Activated T-helper 1 cell treated with anti-CD3 and anti-CD28 coated beads, Interleukin-12 subunit alpha, Interleukin-12 subunit beta, Interleukin-2, Interleukin-4 antibody, amounts not matched to agents 30 ng/mL and 10 ng/mL and 1 ng/mL, durations not matched to agents 14 hours and 24 hours and 36 hours (primary cell): ENCODE measurements at regions of chr11 and their contacts with region 1.

Region 1: DNA sequence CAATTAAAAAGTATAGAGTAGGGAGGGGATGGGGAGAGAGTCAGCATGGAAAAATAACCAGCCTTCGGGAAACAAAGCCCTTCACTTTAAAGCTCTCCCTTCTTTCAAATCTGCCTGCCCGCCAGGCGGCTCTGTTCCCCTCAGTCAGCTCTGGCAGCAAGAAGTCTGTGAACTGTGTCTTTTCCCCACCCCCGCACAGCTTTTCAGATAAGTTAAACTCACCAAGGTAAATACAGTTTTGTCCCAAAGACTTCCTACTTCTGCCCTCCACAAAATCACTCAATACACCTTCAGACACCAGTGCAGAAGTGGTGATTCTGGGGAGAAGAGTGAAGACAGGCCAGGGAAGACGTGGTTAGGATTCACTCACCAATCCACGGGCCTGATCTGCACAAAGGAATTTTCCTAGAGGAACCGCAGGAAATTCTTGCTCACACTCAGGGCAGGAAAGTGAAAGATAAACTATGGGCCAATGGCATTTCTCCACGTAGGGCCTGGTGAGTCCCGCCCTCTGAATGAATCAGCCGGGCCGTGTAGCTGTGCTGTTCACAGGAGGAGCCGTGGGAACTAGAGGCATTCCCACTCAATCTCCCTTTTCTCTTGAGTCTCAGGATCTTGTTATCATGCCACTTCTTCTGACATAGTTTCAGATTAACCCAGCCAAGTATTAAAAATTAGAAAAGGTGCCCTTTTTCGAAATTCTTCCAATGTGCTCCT is at the start of gene TRIM5:
- DNase-seq: peak; percentile 74
- H3K4me3 Mint-ChIP-seq: peak within 1 kb of the TSS; percentile 89
- H3K27ac Mint-ChIP-seq: peak within 1 kb of the TSS; percentile 96
- H3K4me1 Mint-ChIP-seq: peaks cover 57% of the 10 kb centered on the region
- H3K27me3 Mint-ChIP-seq: no peaks in the 10 kb centered on the region
- total RNA-seq, gene TRIM5: 7.9 and 8.6 TPM in 2 replicates

Region 2: DNA sequence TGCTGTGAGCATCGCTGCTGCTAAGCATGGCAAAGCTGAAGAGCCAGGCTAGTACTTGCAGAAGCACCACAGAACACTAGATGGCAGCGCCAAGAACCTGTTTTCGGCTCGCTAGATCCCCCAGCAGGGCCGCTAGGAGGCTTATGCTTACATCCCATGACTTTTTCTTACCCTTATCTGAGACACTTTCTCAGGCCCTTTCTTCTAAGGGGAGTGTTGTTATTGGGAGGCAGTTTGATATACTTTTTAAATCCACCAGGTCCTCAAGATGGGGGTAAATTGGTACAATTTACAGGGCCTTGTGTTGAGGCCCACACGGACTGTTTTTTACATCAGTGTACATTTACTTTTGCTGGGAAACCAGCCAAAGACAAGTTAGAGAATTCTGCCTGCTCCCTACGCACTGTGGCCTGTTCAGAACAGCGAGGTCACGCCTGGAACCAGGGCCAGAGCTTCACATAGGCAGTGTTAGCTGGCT is 84.4 kb before region 1 on chr11:
- intact Hi-C with region 1: loop called (anchors 1 kb)
- DNase-seq: peak; percentile 45
- H3K4me3 Mint-ChIP-seq: no peak overlapping the region
- H3K27ac Mint-ChIP-seq: no peak overlapping the region
- H3K4me1 Mint-ChIP-seq: peaks cover 11% of the 10 kb centered on the region
- H3K27me3 Mint-ChIP-seq: peaks cover 1% of the 10 kb centered on the region

Region 3: GRCh38 chr11:5624489-5625279 is 60.1 kb before region 1 on chr11 and contains the start of gene TRIM34:
- intact Hi-C with region 1: loop called (anchors 1 kb)
- DNase-seq: peak; percentile 68
- H3K4me3 Mint-ChIP-seq: peak within 1 kb of the TSS; percentile 91
- H3K27ac Mint-ChIP-seq: peak within 1 kb of the TSS; percentile 79
- H3K4me1 Mint-ChIP-seq: peaks cover 47% of the 10 kb centered on the region
- H3K27me3 Mint-ChIP-seq: no peaks in the 10 kb centered on the region
- total RNA-seq, gene TRIM34: 4.6 and 5.4 TPM in 2 replicates

Region 4: DNA sequence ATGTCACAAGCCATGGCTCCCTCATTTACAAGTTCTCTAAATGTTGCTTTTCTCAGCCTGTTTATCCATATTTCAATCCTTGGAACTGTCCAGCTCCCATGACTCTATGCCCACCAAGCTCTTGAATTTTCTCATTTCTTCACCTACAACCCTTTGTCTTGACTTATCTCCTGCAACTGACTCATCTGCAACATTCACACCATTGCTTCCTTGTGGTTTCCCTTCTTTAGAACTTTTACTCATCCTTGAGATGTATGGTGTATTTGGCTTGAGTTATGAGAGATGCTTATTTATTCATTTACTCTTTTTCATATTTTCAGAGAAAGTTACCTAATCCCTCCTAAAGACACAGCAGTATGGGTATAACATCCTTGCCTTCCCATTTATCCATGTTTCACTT is 41.2 kb before region 1 on chr11:
- intact Hi-C with region 1: loop called (anchors 5 kb)
- DNase-seq: no peak
- H3K4me3 Mint-ChIP-seq: no peak overlapping the region
- H3K27ac Mint-ChIP-seq: no peak overlapping the region
- H3K4me1 Mint-ChIP-seq: peaks cover 9% of the 10 kb centered on the region
- H3K27me3 Mint-ChIP-seq: no peaks in the 10 kb centered on the region

Region 5: GRCh38 chr11:6612213-6613041 is 927.6 kb after region 1 on chr11 and contains the start of gene TAF10:
- intact Hi-C with region 1: loop called (anchors 10 kb)
- DNase-seq: peak; percentile 95
- H3K4me3 Mint-ChIP-seq: peak within 1 kb of the TSS; percentile 93
- H3K27ac Mint-ChIP-seq: peak within 1 kb of the TSS; percentile 87
- H3K4me1 Mint-ChIP-seq: peaks cover 29% of the 10 kb centered on the region
- H3K27me3 Mint-ChIP-seq: no peaks in the 10 kb centered on the region
- total RNA-seq, gene TAF10: 155 and 166 TPM in 2 replicates